IMR-90 (cell line): ENCODE measurements at regions of chr3 and their contacts with region 1.

Region 1: DNA sequence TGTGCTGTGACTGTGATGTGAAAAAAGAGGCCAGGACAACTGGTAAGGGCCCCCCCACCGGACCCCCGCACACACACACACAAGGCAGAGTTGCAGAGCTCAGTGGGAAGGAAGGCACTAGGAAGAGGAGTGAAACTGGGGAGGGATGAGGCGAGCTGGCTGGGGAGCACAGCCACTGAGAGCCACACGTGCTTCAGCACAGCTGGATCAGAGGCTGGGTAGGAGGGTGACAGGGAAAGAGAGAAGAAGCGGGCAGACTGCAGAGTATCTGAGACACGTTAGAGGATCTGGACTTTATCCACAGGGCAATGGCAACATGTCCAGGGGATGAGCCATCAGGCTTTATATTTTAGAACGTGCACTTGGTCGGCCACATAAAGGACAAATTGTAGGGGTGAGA is 38.0 kb upstream of the TKT start:
- DNase-seq: no peak
- ATAC-seq: no peak
- H3K4me3 ChIP-seq: no peak overlapping the region
- H3K27ac ChIP-seq: no peak overlapping the region
- H3K4me1 ChIP-seq: no peaks in the 10 kb centered on the region
- H3K27me3 ChIP-seq: no peaks in the 10 kb centered on the region
- CTCF ChIP-seq: no peak
- POLR2A ChIP-seq: no peak
- RAD21 ChIP-seq: no peak

Region 2: GRCh38 chr3:53219895-53220483 is 73.9 kb before region 1 on chr3:
- CTCF ChIA-PET with region 1: no interaction called
- POLR2A ChIA-PET with region 1: no interaction called
- dilution Hi-C with region 1: no loop called
- in situ Hi-C with region 1: no loop called
- intact Hi-C with region 1: loop called (anchors 5 kb)
- DNase-seq: peak; percentile 72
- ATAC-seq: peak; percentile 95
- H3K4me3 ChIP-seq: no peak overlapping the region
- H3K27ac ChIP-seq: no peak overlapping the region
- H3K4me1 ChIP-seq: no peaks in the 10 kb centered on the region
- H3K27me3 ChIP-seq: no peaks in the 10 kb centered on the region
- CTCF ChIP-seq: peak; percentile 91
- POLR2A ChIP-seq: peak; percentile 39; the same call in 1 of the 2 replicates
- RAD21 ChIP-seq: peak; percentile 87

Region 3: DNA sequence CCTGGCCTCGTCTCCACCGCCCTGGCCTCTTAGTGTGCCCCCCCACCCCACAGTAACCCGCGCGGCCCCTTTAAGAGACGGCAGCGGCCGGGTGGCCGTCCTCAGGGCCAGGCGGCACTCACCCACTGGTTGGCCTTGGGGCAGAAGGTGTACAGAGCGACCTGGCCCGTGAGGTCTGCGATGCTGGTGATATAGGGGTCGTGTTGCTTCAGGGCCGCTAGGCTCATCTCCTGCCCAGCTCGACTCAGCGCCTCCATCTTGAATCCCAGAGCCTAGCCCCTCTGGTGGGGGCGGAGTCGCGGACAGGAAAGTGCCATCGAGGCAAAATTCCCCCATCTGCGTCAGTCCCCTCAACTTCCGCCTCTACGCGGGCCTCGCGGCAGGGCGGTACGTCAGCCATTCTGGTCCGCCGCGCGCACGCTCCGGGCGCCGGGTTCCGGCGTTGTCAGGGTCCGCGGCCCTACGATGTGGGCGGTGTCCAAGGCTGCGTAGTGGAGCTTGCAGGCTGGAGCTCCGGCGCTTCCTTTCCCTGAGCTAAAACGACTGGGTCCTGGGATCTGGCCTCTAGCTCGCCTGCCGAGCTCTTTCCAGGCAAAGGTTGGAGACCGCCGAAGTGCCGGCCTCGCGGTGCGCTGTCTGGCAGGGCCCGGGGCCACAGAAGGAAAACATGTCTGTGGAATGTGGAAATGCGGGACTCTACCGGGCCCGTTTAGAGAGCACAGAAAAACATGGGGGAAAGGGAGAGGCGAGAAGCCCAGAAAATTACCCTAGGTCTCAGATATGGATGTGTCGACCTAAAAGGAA is 53.6 kb after region 1 on chr3 and contains the start of gene DCP1A:
- CTCF ChIA-PET with region 1: interaction called, 3 read pairs
- POLR2A ChIA-PET with region 1: no interaction called
- dilution Hi-C with region 1: no loop called
- in situ Hi-C with region 1: no loop called
- intact Hi-C with region 1: loop called (anchors 5 kb)
- DNase-seq: peak; percentile 97
- ATAC-seq: peak; percentile 97
- H3K4me3 ChIP-seq: peak within 1 kb of the TSS; percentile 82
- H3K27ac ChIP-seq: peak within 1 kb of the TSS; percentile 97
- H3K4me1 ChIP-seq: no peaks in the 10 kb centered on the region; the same call in 1 of the 2 replicates
- H3K27me3 ChIP-seq: no peaks in the 10 kb centered on the region
- CTCF ChIP-seq: no peak
- POLR2A ChIP-seq: peak; percentile 97
- RAD21 ChIP-seq: no peak
- total RNA-seq, gene DCP1A: 18.6 and 30.1 TPM in 2 replicates

Region 4: GRCh38 chr3:53513556-53514190 is 219.8 kb after region 1 on chr3:
- CTCF ChIA-PET with region 1: no interaction called
- POLR2A ChIA-PET with region 1: no interaction called
- dilution Hi-C with region 1: no loop called
- in situ Hi-C with region 1: no loop called
- intact Hi-C with region 1: loop called (anchors 10 kb)
- DNase-seq: no peak
- ATAC-seq: no peak
- H3K4me3 ChIP-seq: no peak overlapping the region
- H3K27ac ChIP-seq: no peak overlapping the region
- H3K4me1 ChIP-seq: no peaks in the 10 kb centered on the region
- H3K27me3 ChIP-seq: peaks cover 5% of the 10 kb centered on the region; the same call in 1 of the 2 replicates
- CTCF ChIP-seq: no peak
- POLR2A ChIP-seq: no peak
- RAD21 ChIP-seq: no peak

Region 5: DNA sequence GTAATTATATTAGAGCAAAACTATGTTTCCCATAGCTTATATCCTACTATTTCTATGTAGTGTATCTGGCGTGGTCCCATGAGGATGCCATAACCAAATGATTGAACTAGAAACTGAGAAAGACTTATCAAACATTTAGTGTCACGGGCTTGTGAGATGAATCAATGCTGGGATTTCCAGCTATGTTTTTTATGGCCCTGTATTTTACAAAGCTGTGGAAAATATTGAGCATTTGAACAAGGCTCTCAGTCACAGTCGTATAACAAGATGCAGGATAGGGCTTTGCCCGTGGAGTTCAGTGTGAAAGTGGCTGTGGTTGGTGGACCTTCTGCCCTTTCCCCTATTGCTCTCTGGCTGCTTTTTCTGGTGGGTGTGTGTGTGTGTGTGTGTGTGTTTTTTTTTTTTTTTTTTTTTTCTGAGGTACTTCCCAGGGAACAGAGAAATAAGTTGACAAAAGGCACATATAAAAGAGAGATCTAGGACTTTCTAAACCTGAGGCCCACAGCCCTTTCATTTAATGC is 261.3 kb after region 1 on chr3:
- CTCF ChIA-PET with region 1: no interaction called
- POLR2A ChIA-PET with region 1: no interaction called
- dilution Hi-C with region 1: no loop called
- in situ Hi-C with region 1: no loop called
- intact Hi-C with region 1: no loop called
- DNase-seq: no peak
- ATAC-seq: no peak
- H3K4me3 ChIP-seq: no peak overlapping the region
- H3K27ac ChIP-seq: no peak overlapping the region
- H3K4me1 ChIP-seq: no peaks in the 10 kb centered on the region
- H3K27me3 ChIP-seq: no peaks in the 10 kb centered on the region
- CTCF ChIP-seq: no peak
- POLR2A ChIP-seq: no peak
- RAD21 ChIP-seq: no peak

Region 6: GRCh38 chr3:53606793-53607192 is 312.9 kb after region 1 on chr3:
- CTCF ChIA-PET with region 1: no interaction called
- POLR2A ChIA-PET with region 1: no interaction called
- dilution Hi-C with region 1: no loop called
- in situ Hi-C with region 1: no loop called
- intact Hi-C with region 1: loop called (anchors 5 kb)
- DNase-seq: no peak
- ATAC-seq: no peak
- H3K4me3 ChIP-seq: no peak overlapping the region
- H3K27ac ChIP-seq: no peak overlapping the region
- H3K4me1 ChIP-seq: no peaks in the 10 kb centered on the region
- H3K27me3 ChIP-seq: no peaks in the 10 kb centered on the region
- CTCF ChIP-seq: no peak
- POLR2A ChIP-seq: no peak
- RAD21 ChIP-seq: no peak

Region 7: GRCh38 chr3:53865732-53866499 is 572.0 kb after region 1 on chr3:
- CTCF ChIA-PET with region 1: no interaction called
- POLR2A ChIA-PET with region 1: no interaction called
- dilution Hi-C with region 1: no loop called
- in situ Hi-C with region 1: no loop called
- intact Hi-C with region 1: loop called (anchors 5 kb)
- DNase-seq: no peak
- ATAC-seq: no peak
- H3K4me3 ChIP-seq: no peak overlapping the region
- H3K27ac ChIP-seq: no peak overlapping the region
- H3K4me1 ChIP-seq: no peaks in the 10 kb centered on the region
- H3K27me3 ChIP-seq: no peaks in the 10 kb centered on the region
- CTCF ChIP-seq: no peak
- POLR2A ChIP-seq: no peak
- RAD21 ChIP-seq: no peak

Region 8: GRCh38 chr3:53881691-53882593 is 588.1 kb after region 1 on chr3 and contains the start of gene ACTR8:
- CTCF ChIA-PET with region 1: no interaction called
- POLR2A ChIA-PET with region 1: no interaction called
- dilution Hi-C with region 1: no loop called
- in situ Hi-C with region 1: loop called (anchors 25 kb)
- intact Hi-C with region 1: loop called (anchors 5 kb)
- DNase-seq: peak; percentile 77
- ATAC-seq: peak; percentile 97
- H3K4me3 ChIP-seq: peak within 1 kb of the TSS; percentile 73
- H3K27ac ChIP-seq: peak within 1 kb of the TSS; percentile 97
- H3K4me1 ChIP-seq: peaks cover 8% of the 10 kb centered on the region
- H3K27me3 ChIP-seq: no peaks in the 10 kb centered on the region
- CTCF ChIP-seq: 0 out of 2 replicates have a peak, but pooled peaks have one; percentile 4
- POLR2A ChIP-seq: peak; percentile 81
- RAD21 ChIP-seq: no peak
- total RNA-seq, gene ACTR8: 31.4 and 35.8 TPM in 2 replicates